Naive thymus-derived CD8-positive, alpha-beta T cell (primary cell): ENCODE measurements at regions of chr20 and their contacts with region 1.

Region 1: GRCh38 chr20:50958615-50959542 is at the start of gene MOCS3:
- DNase-seq: peak; percentile 61 to 98 (median 84)
- ATAC-seq: peak; percentile 81 to 84
- H3K4me3 Mint-ChIP-seq: peak within 1 kb of the TSS; percentile 91 to 98 (median 96)
- H3K27ac Mint-ChIP-seq: peak within 1 kb of the TSS; percentile 98 to 100 (median 99)
- H3K4me1 Mint-ChIP-seq: peaks cover 20 to 71% (median 60%) of the 10 kb centered on the region in 4 donors
- H3K27me3 Mint-ChIP-seq: no peaks in the 10 kb centered on the region
- polyA plus RNA-seq, gene MOCS3: 3.5 to 4.8 (median 4.6) TPM

Region 2: GRCh38 chr20:50790651-50791277 is 168.1 kb before region 1 on chr20:
- POLR2A ChIA-PET with region 1: interaction called, 40 read pairs
- DNase-seq: peak; percentile 58 to 85 (median 74)
- ATAC-seq: peak; percentile 62 to 67
- H3K4me3 Mint-ChIP-seq: peak overlapping the region in 5 of 10 donors; percentile 10 to 51 (median 37)
- H3K27ac Mint-ChIP-seq: peak overlapping the region; percentile 66 to 93 (median 86)
- H3K4me1 Mint-ChIP-seq: peaks cover 0 to 19% (median 10%) of the 10 kb centered on the region in 4 donors
- H3K27me3 Mint-ChIP-seq: no peaks in the 10 kb centered on the region

Region 3: DNA sequence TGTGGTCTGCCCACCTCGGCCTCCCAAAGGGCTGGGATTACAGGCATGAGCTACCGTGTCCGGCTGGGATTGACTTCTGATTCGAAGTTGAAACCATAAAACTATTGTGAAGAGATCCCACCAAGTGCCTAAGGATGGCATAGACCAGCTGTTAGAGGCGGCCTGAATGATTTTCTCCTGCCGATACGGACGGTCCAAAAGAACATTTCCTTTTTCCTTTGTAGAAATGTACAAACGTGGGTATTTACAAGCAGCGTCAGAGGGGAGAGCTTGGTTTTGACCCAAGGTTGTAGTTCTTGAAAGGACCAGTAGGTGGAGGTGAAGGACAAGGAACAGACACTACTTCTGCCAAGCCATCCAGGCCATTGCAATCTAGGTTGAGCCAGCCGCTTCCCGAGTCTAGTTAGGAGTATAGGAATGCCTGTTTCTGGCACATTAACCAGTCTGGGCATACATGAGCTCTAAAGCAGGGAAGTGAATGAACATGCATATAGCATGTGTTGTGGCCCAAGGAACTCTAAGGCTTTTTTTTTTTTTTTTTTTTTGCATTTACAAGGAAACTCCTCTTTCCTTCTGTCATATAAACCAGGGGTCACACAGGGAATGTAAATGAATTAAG is 28.8 kb after region 1 on chr20:
- POLR2A ChIA-PET with region 1: no interaction called
- DNase-seq: peak; percentile 28 to 81 (median 66)
- ATAC-seq: peak; percentile 81 to 95
- H3K4me3 Mint-ChIP-seq: no peak overlapping the region
- H3K27ac Mint-ChIP-seq: no peak overlapping the region
- H3K4me1 Mint-ChIP-seq: peaks cover 0 to 4% (median 0%) of the 10 kb centered on the region in 4 donors
- H3K27me3 Mint-ChIP-seq: peaks cover 6 to 37% (median 15%) of the 10 kb centered on the region in 5 donors